A549 (cell line): ENCODE measurements at regions of chr4 and their contacts with region 1.

Region 1: DNA sequence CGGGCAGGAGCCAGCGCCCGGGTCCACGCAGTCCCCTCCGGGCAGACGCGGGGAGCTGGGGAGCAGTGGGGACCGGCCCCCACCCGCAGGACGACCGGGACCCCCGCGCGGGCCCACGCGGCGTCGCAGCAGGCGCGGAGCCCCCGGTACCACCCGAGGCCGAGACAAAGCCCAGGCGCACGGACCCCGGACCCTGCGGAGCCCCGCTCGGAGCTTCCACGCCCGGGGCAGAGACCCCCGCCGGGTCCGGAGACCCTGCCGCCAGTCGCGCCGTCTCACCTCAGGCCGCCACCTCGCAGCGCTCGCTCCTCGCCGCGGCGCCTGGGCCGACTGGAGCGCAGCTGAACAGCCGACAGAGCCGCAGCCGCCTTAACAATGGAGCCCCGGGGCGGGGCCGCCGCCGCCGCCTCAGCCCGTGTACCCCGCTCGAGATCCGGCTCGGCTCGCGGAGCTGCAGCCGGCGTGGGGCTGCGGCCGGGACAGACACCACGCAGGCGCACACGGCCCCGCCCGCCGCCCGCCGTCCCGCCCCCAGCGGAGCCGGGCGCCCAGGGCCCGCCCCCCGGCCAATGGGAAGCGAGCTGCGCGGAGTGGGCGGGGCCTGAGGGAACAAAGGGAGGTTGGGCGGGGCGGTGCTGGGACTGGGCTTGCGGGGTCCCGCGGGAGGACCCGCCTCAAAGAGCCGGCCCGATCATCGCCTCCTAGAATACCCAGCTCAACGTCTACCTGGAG is at the start of gene AFAP1:
- DNase-seq: peak; percentile 69 to 81
- ATAC-seq: peak; percentile 82 to 85
- H3K4me3 ChIP-seq: peak within 1 kb of the TSS; percentile 98
- H3K27ac ChIP-seq: peak within 1 kb of the TSS; percentile 93 to 100
- H3K4me1 ChIP-seq: peaks cover 57% of the 10 kb centered on the region
- CTCF ChIP-seq: no peak
- EP300 ChIP-seq: no peak
- POLR2A ChIP-seq: peak; percentile 26; the same call in 1 of the 2 replicates
- RAD21 ChIP-seq: no peak
- polyA plus RNA-seq, gene AFAP1: 18.9 and 25.4 TPM in 2 replicates

Region 2: GRCh38 chr4:7950301-7951092 is 11.0 kb after region 1 on chr4:
- CTCF ChIA-PET with region 1: interaction called, 11 read pairs
- POLR2A ChIA-PET with region 1: no interaction called
- DNase-seq: no peak
- ATAC-seq: no peak
- H3K4me3 ChIP-seq: no peak overlapping the region
- H3K27ac ChIP-seq: no peak overlapping the region
- H3K4me1 ChIP-seq: no peaks in the 10 kb centered on the region
- CTCF ChIP-seq: no peak
- EP300 ChIP-seq: no peak
- POLR2A ChIP-seq: no peak
- RAD21 ChIP-seq: no peak